ENCODE measurements at regions of chr14 and their contacts with region 1.

Region 1: DNA sequence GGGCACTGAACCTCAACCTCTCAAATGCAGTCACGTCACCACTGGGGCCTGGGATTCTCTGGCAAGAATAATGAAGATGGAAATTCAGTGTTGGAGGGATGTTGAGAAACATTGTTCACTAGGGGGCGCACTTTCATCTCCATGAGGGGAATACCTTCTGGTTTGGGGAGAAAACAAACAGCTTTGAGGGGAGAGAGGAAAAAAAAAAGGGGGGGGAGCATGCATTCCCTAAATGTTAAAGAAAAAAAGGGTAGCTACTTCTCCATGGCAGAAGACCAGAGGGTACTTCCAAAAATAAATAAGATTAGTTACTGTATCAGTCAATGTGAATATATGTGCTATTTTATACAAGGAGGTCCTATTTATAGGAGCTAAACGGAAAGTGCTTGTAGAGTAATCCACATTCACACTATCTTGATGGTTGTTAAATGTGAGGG is 5.8 kb upstream of the TBPL2 start:
- DNase-seq: peak in 7 of 9 donors; percentile 28 to 58 (median 44)
- ATAC-seq: peak; percentile 64
- H3K4me3 ChIP-seq: no peak overlapping the region
- H3K4me3 Mint-ChIP-seq: no peak overlapping the region
- H3K27ac ChIP-seq: no peak overlapping the region
- H3K27ac Mint-ChIP-seq: no peak overlapping the region
- H3K4me1 ChIP-seq: no peaks in the 10 kb centered on the region
- H3K4me1 Mint-ChIP-seq: peaks cover 0 to 10% (median 0%) of the 10 kb centered on the region in 7 donors
- H3K27me3 ChIP-seq: no peaks in the 10 kb centered on the region
- H3K27me3 Mint-ChIP-seq: no peaks in the 10 kb centered on the region

Region 2: GRCh38 chr14:55654243-55654642 is 208.0 kb after region 1 on chr14:
- CTCF ChIA-PET with region 1: no interaction called
- POLR2A ChIA-PET with region 1: no interaction called
- intact Hi-C with region 1: loop called in 1 of 2 experiments (anchors 10 kb)
- DNase-seq: no peak
- ATAC-seq: no peak
- H3K4me3 ChIP-seq: no peak overlapping the region
- H3K4me3 Mint-ChIP-seq: no peak overlapping the region
- H3K27ac ChIP-seq: no peak overlapping the region
- H3K27ac Mint-ChIP-seq: no peak overlapping the region
- H3K4me1 ChIP-seq: no peaks in the 10 kb centered on the region
- H3K4me1 Mint-ChIP-seq: peaks cover 0 to 5% (median 0%) of the 10 kb centered on the region in 7 donors
- H3K27me3 ChIP-seq: no peaks in the 10 kb centered on the region
- H3K27me3 Mint-ChIP-seq: no peaks in the 10 kb centered on the region

Region 3: GRCh38 chr14:55846826-55847446 is 400.7 kb after region 1 on chr14:
- CTCF ChIA-PET with region 1: no interaction called
- POLR2A ChIA-PET with region 1: no interaction called
- intact Hi-C with region 1: no loop called
- DNase-seq: no peak
- ATAC-seq: no peak
- H3K4me3 ChIP-seq: no peak overlapping the region
- H3K4me3 Mint-ChIP-seq: no peak overlapping the region
- H3K27ac ChIP-seq: no peak overlapping the region
- H3K27ac Mint-ChIP-seq: no peak overlapping the region
- H3K4me1 ChIP-seq: no peaks in the 10 kb centered on the region
- H3K4me1 Mint-ChIP-seq: no peaks in the 10 kb centered on the region
- H3K27me3 ChIP-seq: no peaks in the 10 kb centered on the region
- H3K27me3 Mint-ChIP-seq: peaks cover 0 to 12% (median 0%) of the 10 kb centered on the region in 5 donors